ENCODE measurements at regions of chr22 and their contacts with region 1.

Region 1: GRCh38 chr22:17483688-17484381 is 79.5 kb upstream of the SLC25A18 start:
- DNase-seq: no peak
- ATAC-seq: peak; percentile 94

Region 2: DNA sequence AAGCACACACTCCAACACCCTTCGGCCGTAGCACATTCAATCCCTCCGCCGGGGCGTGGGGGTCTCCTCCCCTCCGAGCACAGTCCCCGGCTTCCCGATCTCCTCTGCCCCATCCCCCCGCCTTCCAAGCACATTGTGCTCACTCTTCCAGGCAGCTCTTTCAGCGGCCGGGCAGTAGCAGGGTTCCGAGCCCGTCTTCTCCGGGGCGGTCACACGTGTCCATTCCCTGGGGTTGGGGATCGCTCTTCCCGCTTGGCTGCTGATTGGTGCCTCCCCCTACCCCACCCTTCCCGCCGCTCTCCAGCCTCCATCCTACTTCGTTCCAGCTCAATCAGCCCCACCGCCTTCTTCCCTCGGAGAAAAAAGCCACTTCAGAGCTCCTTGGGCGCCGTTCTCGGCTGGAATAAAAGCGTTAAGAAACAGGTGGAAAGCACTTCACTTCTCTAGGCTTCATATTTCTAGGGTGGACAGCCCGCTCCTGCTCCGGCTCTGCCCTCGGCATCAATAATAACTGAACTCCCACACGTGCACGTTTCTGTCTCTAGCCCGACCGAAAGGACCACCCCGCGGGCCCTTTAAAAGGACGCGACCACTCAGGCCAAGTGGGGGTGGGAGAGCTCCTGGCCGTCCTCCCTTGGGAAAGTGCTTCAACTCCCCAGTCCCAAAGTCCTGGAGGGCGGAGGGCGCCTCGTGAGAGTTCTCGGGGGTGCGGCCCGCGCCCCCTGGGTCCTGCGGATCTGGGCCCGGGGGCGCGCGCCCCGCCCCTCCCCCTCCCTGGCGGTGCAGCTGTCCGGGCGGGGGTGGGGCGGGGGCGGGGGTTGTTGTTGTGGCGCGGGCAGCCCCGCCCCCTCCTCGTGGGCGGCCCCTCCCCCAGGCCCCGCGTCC is 115.0 kb before region 1 on chr22:
- intact Hi-C with region 1: loop called (anchors 10 kb)
- DNase-seq: peak; percentile 69
- ATAC-seq: peak; percentile 81

Region 3: GRCh38 chr22:17523925-17524324 is 40.1 kb after region 1 on chr22:
- intact Hi-C with region 1: no loop called
- DNase-seq: no peak
- ATAC-seq: no peak

Measured in Right ventricle myocardium superior (tissue), 1 donor.